ENCODE measurements at regions of chr4 and their contacts with region 1.

Region 1: GRCh38 chr4:15244354-15244753 is 183.5 kb upstream of the C1QTNF7 start:
- DNase-seq: no peak
- ATAC-seq: no peak
- H3K4me3 ChIP-seq: no peak overlapping the region
- H3K27ac ChIP-seq: no peak overlapping the region
- H3K4me1 ChIP-seq: peaks cover 0 to 16% (median 0%) of the 10 kb centered on the region in 9 donors
- H3K27me3 ChIP-seq: no peaks in the 10 kb centered on the region
- CTCF ChIP-seq: no peak

Region 2: GRCh38 chr4:15291122-15291521 is 46.8 kb after region 1 on chr4:
- intact Hi-C with region 1: loop called in 1 of 10 experiments (anchors 2 kb)
- DNase-seq: no peak
- ATAC-seq: no peak
- H3K4me3 ChIP-seq: no peak overlapping the region
- H3K27ac ChIP-seq: no peak overlapping the region
- H3K4me1 ChIP-seq: no peaks in the 10 kb centered on the region
- H3K27me3 ChIP-seq: no peaks in the 10 kb centered on the region
- CTCF ChIP-seq: no peak

Region 3: GRCh38 chr4:15344041-15344440 is 99.7 kb after region 1 on chr4:
- intact Hi-C with region 1: no loop called
- DNase-seq: no peak
- ATAC-seq: peak in 2 of 8 donors; percentile 16 to 28
- H3K4me3 ChIP-seq: no peak overlapping the region
- H3K27ac ChIP-seq: no peak overlapping the region
- H3K4me1 ChIP-seq: peaks cover 0 to 23% (median 5%) of the 10 kb centered on the region in 9 donors
- H3K27me3 ChIP-seq: peaks cover 0 to 6% (median 0%) of the 10 kb centered on the region in 7 donors
- CTCF ChIP-seq: no peak

Measured in heart right ventricle (tissue), 16 donors.